Naive thymus-derived CD4-positive, alpha-beta T cell (primary cell): ENCODE measurements at regions of chr5 and their contacts with region 1.

Region 1: DNA sequence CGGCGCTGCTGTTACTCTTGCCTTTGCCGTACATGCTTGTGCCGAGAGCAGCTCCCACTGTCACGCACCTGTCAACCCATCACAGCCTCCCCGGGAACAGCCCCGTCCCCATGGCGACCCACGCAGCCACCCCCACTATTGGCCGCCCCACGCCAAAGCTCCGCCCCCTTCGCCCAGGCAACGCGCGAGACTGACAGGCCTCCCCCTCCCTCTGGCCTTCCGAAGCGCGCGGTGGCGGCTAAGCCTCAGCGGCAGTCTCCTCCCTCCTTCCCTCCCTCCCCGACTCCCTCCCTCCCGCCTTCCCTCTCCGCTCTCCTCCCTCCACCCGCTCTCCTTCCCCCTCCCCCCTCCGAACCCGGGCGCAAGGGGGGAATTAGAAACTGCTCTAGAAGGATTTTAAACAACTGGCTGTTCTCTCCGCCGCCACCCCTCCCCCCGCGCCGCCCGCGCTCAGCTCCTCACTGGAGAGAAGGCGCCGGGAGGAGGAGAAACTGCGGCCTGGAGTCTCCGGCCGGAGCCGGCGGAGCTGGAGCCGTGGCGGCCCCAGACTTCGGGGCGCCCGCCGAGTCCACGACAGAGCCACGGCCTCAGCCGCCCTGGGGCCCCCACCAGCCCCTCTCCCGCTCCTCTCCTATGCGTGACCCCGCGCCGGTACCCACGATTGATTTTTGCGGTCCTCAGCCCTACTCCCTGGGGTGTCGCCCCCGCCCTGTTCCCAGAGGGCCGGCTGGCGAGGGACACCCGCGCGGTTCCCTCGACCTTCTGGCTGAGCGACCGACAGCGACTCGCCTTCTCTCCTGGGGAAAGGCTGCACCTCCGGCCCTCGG is at the start of gene SSBP2:
- DNase-seq: peak; percentile 99 to 100 (median 99)
- ATAC-seq: peak; percentile 93
- H3K4me3 ChIP-seq: peak within 1 kb of the TSS; percentile 61
- H3K4me3 Mint-ChIP-seq: peak within 1 kb of the TSS; percentile 92 to 100 (median 96)
- H3K27ac ChIP-seq: peak within 1 kb of the TSS; percentile 87
- H3K27ac Mint-ChIP-seq: peak within 1 kb of the TSS; percentile 81 to 96 (median 94)
- H3K4me1 ChIP-seq: peaks cover 6 to 13% of the 10 kb centered on the region in 2 donors
- H3K4me1 Mint-ChIP-seq: peaks cover 21 to 49% (median 38%) of the 10 kb centered on the region in 7 donors
- H3K27me3 ChIP-seq: no peaks in the 10 kb centered on the region
- H3K27me3 Mint-ChIP-seq: peaks cover 0 to 49% (median 0%) of the 10 kb centered on the region in 5 donors
- total RNA-seq, gene SSBP2: 36.7 to 73.1 (median 55.9) TPM

Region 2: DNA sequence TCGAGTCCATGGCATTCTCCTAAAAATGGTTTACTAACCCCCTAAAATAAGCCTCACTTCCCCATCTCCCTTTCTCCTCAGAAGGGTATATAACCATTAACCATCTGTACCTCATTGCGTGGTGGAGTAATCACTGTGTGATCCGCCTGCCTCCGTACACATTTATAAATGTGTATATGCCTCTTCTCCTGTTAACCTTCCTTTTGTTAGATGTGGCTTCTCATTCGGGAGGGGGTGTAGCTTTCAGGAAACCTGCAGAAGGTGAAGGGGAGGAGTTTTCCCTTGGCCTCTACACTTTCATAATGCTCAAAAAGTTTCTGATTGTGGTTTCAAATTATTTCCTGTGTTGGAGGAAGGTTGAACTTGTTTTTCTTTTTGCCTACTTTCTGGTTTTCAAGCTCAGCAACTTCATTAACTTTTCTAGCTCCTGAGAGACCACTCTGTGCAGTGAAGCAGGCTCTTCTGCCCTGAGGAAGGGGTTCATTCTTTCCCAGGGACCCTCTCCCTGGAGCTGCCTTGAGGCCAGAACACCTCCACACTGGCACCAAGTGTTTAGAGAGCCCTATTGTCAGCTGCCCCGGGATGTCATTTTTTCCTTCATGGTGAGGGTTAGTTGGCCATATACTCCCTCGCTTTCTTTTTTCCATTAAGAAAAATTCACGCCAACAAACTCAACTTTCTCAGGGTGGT is 744.1 kb before region 1 on chr5:
- CTCF ChIA-PET with region 1: no interaction called
- POLR2A ChIA-PET with region 1: no interaction called
- intact Hi-C with region 1: loop called in 1 of 2 experiments (anchors 5 kb)
- DNase-seq: peak in 8 of 9 donors; percentile 48 to 91 (median 88)
- ATAC-seq: peak; percentile 95
- H3K4me3 ChIP-seq: peak overlapping the region; percentile 53
- H3K4me3 Mint-ChIP-seq: peak overlapping the region; percentile 75 to 95 (median 89)
- H3K27ac ChIP-seq: peak overlapping the region; percentile 80
- H3K27ac Mint-ChIP-seq: peak overlapping the region; percentile 92 to 100 (median 95)
- H3K4me1 ChIP-seq: peaks cover 35 to 64% of the 10 kb centered on the region in 2 donors
- H3K4me1 Mint-ChIP-seq: peaks cover 45 to 93% (median 80%) of the 10 kb centered on the region in 7 donors
- H3K27me3 ChIP-seq: no peaks in the 10 kb centered on the region
- H3K27me3 Mint-ChIP-seq: no peaks in the 10 kb centered on the region

Region 3: DNA sequence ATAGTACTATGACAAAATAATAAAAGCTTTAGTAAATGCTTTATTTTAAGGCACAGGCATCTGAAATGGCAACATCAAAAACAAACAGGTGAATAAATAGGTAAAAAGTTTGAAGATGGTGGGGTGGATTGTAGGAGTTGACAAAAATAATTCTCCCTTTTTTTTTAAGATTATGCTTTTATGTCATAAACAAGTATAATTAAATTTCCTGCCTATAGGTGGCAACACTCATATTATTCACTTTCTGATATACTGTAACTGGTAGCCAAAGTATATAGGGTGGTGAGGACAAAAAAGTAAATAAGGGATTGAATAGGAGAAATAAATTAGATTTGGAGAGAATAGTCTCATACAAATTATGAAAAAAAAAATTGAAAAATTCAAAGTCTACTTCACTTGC is 237.2 kb before region 1 on chr5:
- CTCF ChIA-PET with region 1: interaction called, 4 read pairs
- POLR2A ChIA-PET with region 1: interaction called, 4 read pairs
- intact Hi-C with region 1: loop called in 1 of 2 experiments (anchors 1 kb)
- DNase-seq: peak in 4 of 9 donors; percentile 20 to 32 (median 22)
- ATAC-seq: peak; percentile 55
- H3K4me3 ChIP-seq: no peak overlapping the region
- H3K4me3 Mint-ChIP-seq: no peak overlapping the region
- H3K27ac ChIP-seq: no peak overlapping the region
- H3K27ac Mint-ChIP-seq: peak overlapping the region in 2 of 9 donors; percentile 8 to 18
- H3K4me1 ChIP-seq: no peaks in the 10 kb centered on the region
- H3K4me1 Mint-ChIP-seq: peaks cover 0 to 24% (median 6%) of the 10 kb centered on the region in 7 donors
- H3K27me3 ChIP-seq: no peaks in the 10 kb centered on the region
- H3K27me3 Mint-ChIP-seq: no peaks in the 10 kb centered on the region

Region 4: DNA sequence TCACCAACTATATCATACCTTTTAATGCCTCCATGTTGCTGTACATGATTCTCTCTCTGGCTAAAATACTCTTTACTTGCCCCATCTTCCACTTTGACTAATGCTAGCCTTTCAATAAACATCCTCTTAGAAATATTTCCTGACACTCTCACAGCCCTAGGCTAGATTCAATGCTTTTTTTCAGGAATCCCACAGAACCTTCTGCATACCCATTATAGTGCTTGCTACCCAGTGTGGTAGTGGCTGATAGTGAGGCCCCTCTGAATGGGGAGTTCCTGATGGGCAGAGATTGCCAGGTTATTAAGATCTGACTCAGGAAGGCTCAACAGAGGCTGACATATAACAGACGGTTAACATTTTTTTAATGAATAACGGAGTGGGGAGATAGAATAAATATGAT is 11.9 kb before region 1 on chr5:
- CTCF ChIA-PET with region 1: no interaction called
- POLR2A ChIA-PET with region 1: interaction called, 12 read pairs
- intact Hi-C with region 1: loop called in 1 of 2 experiments (anchors 1 kb)
- DNase-seq: no peak
- ATAC-seq: no peak
- H3K4me3 ChIP-seq: no peak overlapping the region
- H3K4me3 Mint-ChIP-seq: peak overlapping the region in 1 of 10 donors; percentile 2
- H3K27ac ChIP-seq: no peak overlapping the region
- H3K27ac Mint-ChIP-seq: peak overlapping the region in 1 of 9 donors; percentile 71
- H3K4me1 ChIP-seq: no peaks in the 10 kb centered on the region
- H3K4me1 Mint-ChIP-seq: peaks cover 2 to 84% (median 65%) of the 10 kb centered on the region in 7 donors
- H3K27me3 ChIP-seq: no peaks in the 10 kb centered on the region
- H3K27me3 Mint-ChIP-seq: no peaks in the 10 kb centered on the region

Region 5: DNA sequence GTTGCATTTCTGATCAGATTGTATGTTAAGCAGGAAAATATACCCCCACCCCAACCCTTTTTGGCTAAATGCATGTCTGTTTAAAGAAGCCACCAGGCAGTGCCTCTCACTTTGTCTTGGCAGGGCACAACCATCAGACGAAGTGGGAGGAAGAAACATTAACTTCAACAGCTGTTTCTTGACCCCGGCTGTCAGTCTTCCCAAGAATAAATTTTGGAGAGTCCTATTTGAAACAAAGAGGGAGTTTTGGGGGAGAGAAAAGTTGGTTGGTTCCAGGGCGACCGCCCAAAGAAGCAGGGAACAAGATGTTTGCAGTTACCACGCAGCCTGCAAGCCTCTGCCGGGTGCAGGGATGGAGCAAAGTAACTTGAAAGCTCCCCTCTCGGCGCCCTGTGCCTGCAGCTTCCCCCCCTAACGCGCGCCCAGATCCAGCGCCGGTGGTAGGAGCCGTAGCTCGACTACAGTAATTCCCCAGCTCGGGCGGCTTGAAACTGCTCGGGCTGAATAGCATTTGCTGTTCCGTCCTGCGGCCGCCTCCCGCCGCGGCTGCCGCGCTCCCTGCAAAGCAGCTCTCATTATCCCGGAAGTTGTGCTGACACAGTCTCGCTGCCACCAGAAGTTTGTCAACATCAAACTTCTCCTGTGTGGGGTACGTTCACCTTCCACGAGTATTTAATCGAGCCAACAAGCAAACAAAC is 100.4 kb after region 1 on chr5:
- CTCF ChIA-PET with region 1: interaction called, 24 read pairs
- POLR2A ChIA-PET with region 1: interaction called, 172 read pairs
- intact Hi-C with region 1: loop called (anchors 1 kb)
- DNase-seq: peak; percentile 76 to 92 (median 89)
- ATAC-seq: peak; percentile 95
- H3K4me3 ChIP-seq: peak overlapping the region; percentile 82
- H3K4me3 Mint-ChIP-seq: peak overlapping the region; percentile 92 to 98 (median 94)
- H3K27ac ChIP-seq: peak overlapping the region; percentile 71
- H3K27ac Mint-ChIP-seq: peak overlapping the region; percentile 96 to 100 (median 97)
- H3K4me1 ChIP-seq: peaks cover 18 to 22% of the 10 kb centered on the region in 2 donors
- H3K4me1 Mint-ChIP-seq: peaks cover 23 to 71% (median 56%) of the 10 kb centered on the region in 7 donors
- H3K27me3 ChIP-seq: no peaks in the 10 kb centered on the region
- H3K27me3 Mint-ChIP-seq: no peaks in the 10 kb centered on the region

Region 6: GRCh38 chr5:82225525-82226172 is 474.4 kb after region 1 on chr5:
- CTCF ChIA-PET with region 1: no interaction called
- POLR2A ChIA-PET with region 1: no interaction called
- intact Hi-C with region 1: loop called (anchors 5 kb)
- DNase-seq: peak; percentile 30 to 63 (median 57)
- ATAC-seq: peak; percentile 90
- H3K4me3 ChIP-seq: no peak overlapping the region
- H3K4me3 Mint-ChIP-seq: peak overlapping the region in 2 of 10 donors; percentile 23 to 33
- H3K27ac ChIP-seq: no peak overlapping the region
- H3K27ac Mint-ChIP-seq: no peak overlapping the region
- H3K4me1 ChIP-seq: no peaks in the 10 kb centered on the region
- H3K4me1 Mint-ChIP-seq: peaks cover 0 to 11% (median 4%) of the 10 kb centered on the region in 7 donors
- H3K27me3 ChIP-seq: no peaks in the 10 kb centered on the region
- H3K27me3 Mint-ChIP-seq: no peaks in the 10 kb centered on the region